Lower leg skin (tissue), 4 donors: ENCODE measurements at regions of chr18 and their contacts with region 1.

Region 1: DNA sequence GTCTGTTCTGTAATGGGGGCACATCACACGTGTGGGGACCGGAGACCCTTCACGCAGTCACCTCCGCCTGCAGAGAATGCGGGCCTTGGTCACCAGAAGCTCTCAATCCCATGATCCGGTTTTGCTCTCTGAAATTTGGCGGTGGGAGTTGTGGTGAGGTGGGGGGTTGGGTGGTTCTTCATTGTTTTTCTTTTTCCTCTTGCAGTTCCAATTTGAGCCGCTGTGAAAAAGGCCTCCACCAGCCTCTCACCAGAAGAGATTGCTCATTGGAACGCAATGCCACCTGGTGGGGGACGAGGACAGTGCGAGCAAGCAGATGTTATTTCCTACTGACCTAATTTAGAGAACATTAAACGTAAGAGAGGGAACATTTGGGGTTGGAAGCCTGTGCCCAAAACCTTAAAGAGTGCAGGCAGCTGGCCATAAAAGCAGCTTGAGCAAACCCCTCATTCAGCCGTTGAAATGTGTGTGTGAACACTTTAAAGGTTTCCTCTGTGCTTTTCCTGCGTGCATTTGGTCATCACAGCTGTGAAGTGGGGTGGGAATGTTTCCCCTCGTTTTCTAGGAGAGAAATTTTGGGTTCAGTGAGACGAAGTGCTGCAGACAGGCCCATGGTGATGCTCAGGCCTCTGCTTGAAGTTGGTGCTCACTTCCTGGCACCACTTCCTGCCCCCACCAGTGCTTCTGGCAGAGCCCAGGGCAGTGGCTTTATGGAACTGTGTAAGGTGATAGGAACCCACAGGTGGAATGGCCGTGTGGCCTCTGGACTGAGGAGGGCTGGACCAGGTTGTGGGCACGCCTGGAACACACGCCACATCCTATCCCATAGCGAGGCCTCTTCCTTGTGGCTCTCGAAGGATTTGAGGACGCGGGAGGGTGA is 61.7 kb downstream of the ZCCHC2 start:
- DNase-seq: peak; percentile 85 to 97
- H3K4me3 ChIP-seq: no peak overlapping the region
- CTCF ChIP-seq: peak in 1 of 3 donors; percentile 92
- POLR2A ChIP-seq: no peak

Region 2: GRCh38 chr18:62425465-62426195 is 158.9 kb before region 1 on chr18:
- intact Hi-C with region 1: loop called (anchors 5 kb)
- DNase-seq: peak; percentile 91 to 92
- H3K4me3 ChIP-seq: no peak overlapping the region
- CTCF ChIP-seq: peak in 1 of 3 donors; percentile 79
- POLR2A ChIP-seq: no peak

Region 3: DNA sequence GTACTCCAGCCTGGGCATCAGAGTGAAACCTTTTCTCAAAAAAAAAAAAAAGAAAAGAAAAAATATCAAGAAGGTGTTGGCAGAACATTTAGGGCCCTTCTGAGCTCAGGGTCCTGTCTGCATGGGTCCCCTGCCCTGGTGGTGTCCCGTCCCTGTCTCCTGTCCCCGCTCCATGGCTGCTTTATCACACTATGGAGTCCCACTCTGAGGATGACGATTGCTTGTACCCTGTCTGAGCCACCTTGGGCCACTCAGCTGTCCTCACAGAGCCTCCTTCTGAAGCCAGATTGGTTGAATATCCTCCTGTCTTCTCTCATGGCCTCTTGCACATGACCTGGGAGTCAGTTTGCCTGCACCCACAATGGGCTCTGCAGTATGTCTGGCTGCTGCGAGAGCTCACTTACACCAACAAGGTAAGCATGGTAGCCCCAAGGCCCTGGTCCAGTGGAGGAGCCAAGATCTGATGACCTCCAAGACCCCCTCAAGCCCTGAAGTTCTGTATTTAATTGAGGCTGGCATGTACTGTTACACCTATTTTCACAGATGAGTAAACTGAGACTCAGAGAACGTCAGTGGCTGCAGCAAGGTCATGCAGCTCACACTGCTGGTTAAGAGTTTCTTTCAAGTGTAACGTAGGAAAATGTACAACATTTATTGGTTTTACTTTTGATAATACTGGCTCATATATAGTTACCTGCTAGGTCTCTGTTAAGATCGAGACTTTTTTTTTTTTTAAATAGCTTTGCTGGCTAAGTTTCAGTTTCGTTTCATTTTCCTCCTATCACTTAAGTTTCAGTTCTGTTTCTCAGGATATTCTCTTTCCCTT is 78.6 kb before region 1 on chr18:
- intact Hi-C with region 1: no loop called
- DNase-seq: no peak
- H3K4me3 ChIP-seq: no peak overlapping the region
- CTCF ChIP-seq: no peak
- POLR2A ChIP-seq: no peak